Heart right ventricle (tissue), 16 donors: ENCODE measurements at regions of chr11 and their contacts with region 1.

Region 1: DNA sequence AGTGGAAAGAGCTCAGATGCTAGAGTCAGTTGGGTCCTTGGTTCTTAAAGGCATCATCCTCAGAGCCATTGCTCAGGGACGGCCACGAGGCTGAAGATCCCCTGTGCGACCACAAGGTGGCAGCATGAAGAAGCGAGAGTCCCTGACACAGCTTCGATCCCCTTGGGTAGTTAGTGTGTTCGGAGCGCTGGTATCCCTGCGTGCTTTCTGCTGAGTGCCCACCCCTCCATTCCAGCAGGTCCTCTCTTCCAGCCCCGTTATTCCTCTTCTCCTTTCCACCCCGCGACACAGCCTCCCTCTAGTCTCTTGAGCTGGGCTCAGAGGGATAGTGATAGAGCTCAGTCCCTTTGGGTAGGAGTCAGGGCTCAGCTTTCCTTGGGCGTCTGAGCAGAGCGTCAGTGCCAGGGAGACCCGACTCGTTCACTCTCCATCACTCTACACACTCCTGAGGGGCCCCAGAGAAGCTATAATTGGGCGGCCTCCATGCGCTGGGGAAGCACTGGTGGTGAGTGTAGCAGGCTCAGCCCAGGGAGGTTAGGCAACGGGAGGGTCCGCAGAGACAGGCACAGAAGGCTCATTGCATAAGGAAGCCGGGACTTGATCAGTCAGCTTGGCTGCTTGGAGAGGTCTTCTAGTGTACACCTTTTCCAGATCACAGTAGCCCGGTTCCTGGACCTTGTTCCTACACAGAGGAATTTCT is at the start of gene OR51D1:
- DNase-seq: peak; percentile 74 to 77
- ATAC-seq: peak; percentile 92 to 97 (median 95)
- H3K4me3 ChIP-seq: peak within 1 kb of the TSS in 9 of 10 donors; percentile 12 to 47 (median 31)
- H3K27ac ChIP-seq: peak within 1 kb of the TSS in 3 of 10 donors; percentile 34 to 48 (median 46)
- H3K4me1 ChIP-seq: peaks cover 0 to 26% (median 4%) of the 10 kb centered on the region in 9 donors
- H3K27me3 ChIP-seq: peaks cover 0 to 4% (median 0%) of the 10 kb centered on the region in 7 donors
- CTCF ChIP-seq: peak; percentile 84 to 94 (median 92)
- total RNA-seq, gene OR51D1: not detected

Region 2: GRCh38 chr11:4551346-4551979 is 85.6 kb before region 1 on chr11:
- intact Hi-C with region 1: no loop called
- DNase-seq: no peak
- ATAC-seq: no peak
- H3K4me3 ChIP-seq: no peak overlapping the region
- H3K27ac ChIP-seq: no peak overlapping the region
- H3K4me1 ChIP-seq: no peaks in the 10 kb centered on the region
- H3K27me3 ChIP-seq: peaks cover 0 to 4% (median 0%) of the 10 kb centered on the region in 7 donors
- CTCF ChIP-seq: no peak

Region 3: DNA sequence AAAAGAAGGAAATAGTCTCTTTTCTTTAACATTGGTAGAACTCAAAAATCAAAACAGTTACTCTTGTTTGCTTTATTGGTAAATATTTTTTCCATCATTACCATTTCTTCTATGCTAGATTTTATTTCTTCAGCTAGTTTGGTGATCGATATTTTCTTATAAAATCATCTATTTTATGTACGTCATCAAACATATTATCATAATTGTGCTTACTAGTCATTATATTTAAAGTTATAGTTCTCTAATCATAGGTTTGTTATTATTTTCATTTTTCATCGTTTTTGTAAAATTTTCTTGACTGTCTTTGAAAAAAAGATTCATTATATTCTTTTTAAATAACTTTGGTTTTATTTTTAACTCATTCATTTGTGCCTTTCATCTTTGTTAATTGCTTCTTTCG is 181.1 kb after region 1 on chr11:
- intact Hi-C with region 1: loop called in 1 of 10 experiments (anchors 5 kb)
- DNase-seq: no peak
- ATAC-seq: no peak
- H3K4me3 ChIP-seq: no peak overlapping the region
- H3K27ac ChIP-seq: no peak overlapping the region
- H3K4me1 ChIP-seq: no peaks in the 10 kb centered on the region
- H3K27me3 ChIP-seq: no peaks in the 10 kb centered on the region
- CTCF ChIP-seq: no peak

Region 4: DNA sequence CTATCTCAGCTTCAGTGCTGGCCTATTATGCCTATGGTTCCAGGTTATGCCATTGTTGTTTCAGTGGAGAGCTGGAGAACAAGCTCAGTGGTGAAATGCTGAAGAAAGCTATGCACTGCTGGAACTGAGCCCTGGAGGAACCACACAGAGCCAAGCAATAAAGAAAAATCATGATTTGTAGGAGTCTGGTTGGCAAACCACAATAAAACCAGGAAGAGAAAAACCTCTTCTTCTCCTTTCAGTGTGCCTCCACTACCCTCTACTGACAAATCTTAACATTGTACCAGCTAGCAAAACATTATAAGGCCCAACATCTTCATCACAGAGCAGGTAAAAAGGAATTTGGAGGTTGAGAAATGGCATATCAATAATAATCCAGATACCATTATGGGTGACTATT is 189.3 kb after region 1 on chr11:
- intact Hi-C with region 1: loop called in 8 of 10 experiments (anchors 1 to 5 kb)
- DNase-seq: no peak
- ATAC-seq: peak in 4 of 8 donors; percentile 34 to 70 (median 56)
- H3K4me3 ChIP-seq: no peak overlapping the region
- H3K27ac ChIP-seq: no peak overlapping the region
- H3K4me1 ChIP-seq: no peaks in the 10 kb centered on the region
- H3K27me3 ChIP-seq: no peaks in the 10 kb centered on the region
- CTCF ChIP-seq: peak; percentile 31 to 69 (median 57)

Region 5: DNA sequence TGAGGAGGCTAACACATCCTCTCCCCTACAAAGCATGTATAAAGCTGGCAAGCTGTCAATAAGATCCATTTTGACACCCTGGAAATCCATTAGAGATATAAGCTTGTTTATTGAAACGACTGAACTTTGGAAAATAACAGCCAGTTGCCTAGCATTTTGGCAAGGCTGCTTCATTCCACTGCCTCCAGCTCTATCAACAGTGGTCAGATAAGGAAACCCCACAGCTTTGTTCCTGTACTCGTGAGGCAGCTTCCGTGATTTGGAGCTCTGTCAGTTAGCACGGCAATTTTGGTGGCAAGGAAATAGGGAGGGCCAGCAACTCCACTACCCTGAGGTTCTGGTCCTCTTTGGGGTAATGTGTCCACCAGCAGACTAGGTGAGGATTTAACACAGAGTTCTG is 213.9 kb after region 1 on chr11:
- intact Hi-C with region 1: no loop called
- DNase-seq: peak in 1 of 2 donors; percentile 29
- ATAC-seq: peak in 7 of 8 donors; percentile 30 to 94 (median 82)
- H3K4me3 ChIP-seq: peak overlapping the region in 1 of 10 donors; percentile 14
- H3K27ac ChIP-seq: no peak overlapping the region
- H3K4me1 ChIP-seq: peaks cover 0 to 8% (median 0%) of the 10 kb centered on the region in 9 donors
- H3K27me3 ChIP-seq: no peaks in the 10 kb centered on the region
- CTCF ChIP-seq: no peak

Region 6: GRCh38 chr11:5004424-5005274 is 367.5 kb after region 1 on chr11:
- intact Hi-C with region 1: loop called in 7 of 10 experiments (anchors 2 to 5 kb)
- DNase-seq: peak; percentile 21 to 34
- ATAC-seq: peak in 2 of 8 donors; percentile 41 to 44
- H3K4me3 ChIP-seq: no peak overlapping the region
- H3K27ac ChIP-seq: no peak overlapping the region
- H3K4me1 ChIP-seq: no peaks in the 10 kb centered on the region
- H3K27me3 ChIP-seq: peaks cover 0 to 6% (median 0%) of the 10 kb centered on the region in 7 donors
- CTCF ChIP-seq: peak; percentile 24 to 74 (median 63)